ENCODE measurements at regions of chr11 and their contacts with region 1.

Region 1: GRCh38 chr11:73318501-73319011 is 10.5 kb downstream of the ARHGEF17 start:
- DNase-seq: no peak
- H3K4me3 ChIP-seq: no peak overlapping the region
- H3K27ac ChIP-seq: peak overlapping the region; percentile 79
- H3K4me1 ChIP-seq: peaks cover 80% of the 10 kb centered on the region
- H3K27me3 ChIP-seq: no peaks in the 10 kb centered on the region
- CTCF ChIP-seq: no peak

Region 2: GRCh38 chr11:72840780-72841179 is 477.8 kb before region 1 on chr11:
- CTCF ChIA-PET with region 1: no interaction called
- POLR2A ChIA-PET with region 1: no interaction called
- intact Hi-C with region 1: no loop called
- DNase-seq: peak; percentile 30
- H3K4me3 ChIP-seq: no peak overlapping the region
- H3K27ac ChIP-seq: no peak overlapping the region
- H3K4me1 ChIP-seq: no peaks in the 10 kb centered on the region
- H3K27me3 ChIP-seq: no peaks in the 10 kb centered on the region
- CTCF ChIP-seq: no peak

Region 3: GRCh38 chr11:72924568-72925190 is 393.9 kb before region 1 on chr11:
- CTCF ChIA-PET with region 1: no interaction called
- POLR2A ChIA-PET with region 1: no interaction called
- intact Hi-C with region 1: no loop called
- DNase-seq: peak; percentile 43
- H3K4me3 ChIP-seq: no peak overlapping the region
- H3K27ac ChIP-seq: no peak overlapping the region
- H3K4me1 ChIP-seq: peaks cover 3% of the 10 kb centered on the region
- H3K27me3 ChIP-seq: no peaks in the 10 kb centered on the region
- CTCF ChIP-seq: peak; percentile 74

Region 4: DNA sequence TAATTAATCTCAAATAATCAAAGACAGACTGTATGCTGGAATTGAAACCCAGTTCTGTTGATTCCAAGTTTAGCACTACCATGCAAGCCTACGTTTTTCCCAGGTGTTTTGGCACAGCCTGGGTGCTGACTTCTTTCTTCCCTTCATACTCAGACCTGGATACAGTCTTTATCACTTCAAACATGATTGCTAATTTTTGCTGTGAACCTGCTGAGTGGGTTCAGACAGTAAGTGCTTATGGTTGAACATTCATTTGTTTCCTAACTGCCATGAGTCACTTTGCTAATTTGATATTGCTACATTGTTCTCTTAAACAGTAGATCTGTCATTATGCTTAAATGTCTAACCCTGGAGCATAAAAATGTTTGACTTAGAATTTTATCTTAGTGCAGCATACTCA is 570.5 kb after region 1 on chr11:
- CTCF ChIA-PET with region 1: no interaction called
- POLR2A ChIA-PET with region 1: interaction called, 11 read pairs
- intact Hi-C with region 1: no loop called
- DNase-seq: no peak
- H3K4me3 ChIP-seq: no peak overlapping the region
- H3K27ac ChIP-seq: no peak overlapping the region
- H3K4me1 ChIP-seq: peaks cover 7% of the 10 kb centered on the region
- H3K27me3 ChIP-seq: no peaks in the 10 kb centered on the region
- CTCF ChIP-seq: no peak

Measured in A673 (cell line).